ENCODE measurements at regions of chr17 and their contacts with region 1.

Region 1: GRCh38 chr17:58224315-58224714 is 5.3 kb upstream of the MKS1 start:
- DNase-seq: no peak
- H3K4me3 ChIP-seq: no peak overlapping the region
- H3K27ac ChIP-seq: no peak overlapping the region
- H3K4me1 ChIP-seq: peaks cover 0 to 6% (median 0%) of the 10 kb centered on the region in 4 experiments; a peak in 5 of 7 replicates
- H3K27me3 ChIP-seq: peaks cover 1 to 10% (median 5%) of the 10 kb centered on the region in 4 experiments; a peak in 4 of 7 replicates
- CTCF ChIP-seq: no peak
- EP300 ChIP-seq: no peak
- POLR2A ChIP-seq: no peak
- RAD21 ChIP-seq: no peak

Region 2: GRCh38 chr17:58236394-58236793 is 12.1 kb after region 1 on chr17:
- CTCF ChIA-PET with region 1: interaction called, 13 read pairs
- POLR2A ChIA-PET with region 1: interaction called, 5 read pairs
- DNase-seq: no peak
- H3K4me3 ChIP-seq: no peak overlapping the region
- H3K27ac ChIP-seq: no peak overlapping the region
- H3K4me1 ChIP-seq: no peaks in the 10 kb centered on the region
- H3K27me3 ChIP-seq: peaks cover 0 to 9% (median 5%) of the 10 kb centered on the region in 4 experiments; a peak in 4 of 7 replicates
- CTCF ChIP-seq: no peak
- EP300 ChIP-seq: no peak
- POLR2A ChIP-seq: no peak
- RAD21 ChIP-seq: no peak

Region 3: DNA sequence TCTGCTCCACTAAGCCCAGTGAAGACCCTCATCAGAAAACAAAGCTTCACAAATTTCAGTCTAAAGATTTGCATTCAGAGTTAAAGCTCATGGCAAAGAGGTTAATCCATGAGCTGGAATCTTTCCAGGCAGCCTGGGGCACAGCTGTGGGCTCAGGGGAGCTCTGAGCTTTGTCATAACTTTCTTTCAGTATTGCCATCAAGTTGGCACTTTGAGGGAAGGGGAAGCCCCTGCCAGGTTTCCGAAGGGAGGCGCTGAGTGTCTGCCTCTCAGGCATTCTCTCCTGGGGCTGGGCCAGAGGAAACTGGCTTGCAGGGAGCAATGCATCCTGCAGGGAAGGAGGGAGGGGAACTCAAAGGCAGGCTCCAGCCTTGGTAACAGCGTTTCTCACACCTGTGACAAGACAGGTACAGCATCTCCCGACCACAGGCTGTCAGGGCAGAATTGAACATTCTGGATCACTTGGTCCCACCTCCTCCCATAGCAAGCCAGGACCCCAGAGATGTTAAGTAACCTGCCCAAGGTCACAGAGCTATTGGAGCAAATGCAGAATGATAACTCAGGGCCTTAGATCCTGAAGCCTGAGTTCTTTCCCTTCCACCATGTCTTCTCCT is 18.0 kb after region 1 on chr17:
- CTCF ChIA-PET with region 1: interaction called, 13 read pairs
- POLR2A ChIA-PET with region 1: interaction called, 5 read pairs
- DNase-seq: no peak
- H3K4me3 ChIP-seq: no peak overlapping the region
- H3K27ac ChIP-seq: no peak overlapping the region
- H3K4me1 ChIP-seq: peaks cover 0 to 10% (median 0%) of the 10 kb centered on the region in 4 experiments; a peak in 3 of 7 replicates
- H3K27me3 ChIP-seq: peaks cover 0 to 9% (median 8%) of the 10 kb centered on the region in 4 experiments; a peak in 5 of 7 replicates
- CTCF ChIP-seq: 0 out of 4 replicates have a peak, but pooled peaks of 1 of the 3 experiments have one; percentile 4
- EP300 ChIP-seq: no peak
- POLR2A ChIP-seq: no peak
- RAD21 ChIP-seq: peak in 1 of 2 experiments; percentile 31; a peak in 1 of 4 replicates

Region 4: DNA sequence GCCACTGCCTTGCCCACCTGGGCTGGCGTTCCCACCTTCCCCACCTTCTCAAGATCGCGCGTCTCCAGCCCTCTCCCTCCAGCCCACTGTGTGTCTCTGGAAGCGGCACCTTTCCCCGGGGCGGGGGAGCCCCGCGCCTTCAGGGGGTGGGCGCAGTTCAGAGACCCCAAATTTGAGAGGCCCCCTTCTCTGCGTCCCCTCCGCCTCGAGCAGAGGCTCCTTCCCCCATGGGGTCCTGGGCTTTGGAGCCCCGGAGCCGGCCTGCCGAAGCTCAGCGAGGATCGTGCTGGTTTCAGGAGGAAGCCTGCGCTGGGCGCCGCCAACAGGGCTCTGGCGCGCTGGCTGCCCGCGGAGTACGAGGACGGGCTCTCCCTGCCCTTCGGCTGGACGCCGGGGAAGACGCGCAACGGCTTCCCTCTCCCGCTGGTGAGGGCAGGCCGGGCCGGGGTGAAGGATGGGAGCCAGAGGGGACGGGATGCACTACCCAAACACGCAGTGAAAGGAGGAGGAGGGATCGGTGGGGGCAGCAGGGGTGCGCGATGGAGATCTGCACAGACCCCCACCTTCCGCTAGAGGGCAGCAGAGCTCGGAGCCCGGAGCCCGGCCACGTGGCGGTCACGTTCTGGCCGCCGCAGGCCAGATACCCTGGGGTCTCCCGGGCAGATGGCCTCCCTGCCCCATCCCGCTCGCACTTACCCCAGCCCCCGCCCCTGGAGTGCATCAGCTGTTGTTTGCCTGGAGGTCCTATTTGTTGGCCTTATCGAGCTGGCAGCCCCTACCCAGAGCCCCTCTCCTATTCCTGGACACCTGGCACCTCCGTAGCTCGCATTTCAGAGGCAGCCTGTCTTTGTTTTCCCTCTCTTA is 25.2 kb after region 1 on chr17:
- CTCF ChIA-PET with region 1: interaction called, 15 read pairs
- POLR2A ChIA-PET with region 1: no interaction called
- DNase-seq: peak in 1 of 2 experiments; percentile 93
- H3K4me3 ChIP-seq: peak overlapping the region; percentile 28 to 56 (median 36); a peak in 7 of 8 replicates
- H3K27ac ChIP-seq: no peak overlapping the region
- H3K4me1 ChIP-seq: peaks cover 0 to 4% (median 1%) of the 10 kb centered on the region in 4 experiments; a peak in 4 of 7 replicates
- H3K27me3 ChIP-seq: peaks cover 36 to 70% (median 49%) of the 10 kb centered on the region in 4 experiments
- CTCF ChIP-seq: peak; percentile 85 to 88 (median 86)
- EP300 ChIP-seq: peak in 1 of 2 experiments; percentile 42; a peak in 1 of 3 replicates
- POLR2A ChIP-seq: no peak
- RAD21 ChIP-seq: peak; percentile 63 to 66

Region 5: DNA sequence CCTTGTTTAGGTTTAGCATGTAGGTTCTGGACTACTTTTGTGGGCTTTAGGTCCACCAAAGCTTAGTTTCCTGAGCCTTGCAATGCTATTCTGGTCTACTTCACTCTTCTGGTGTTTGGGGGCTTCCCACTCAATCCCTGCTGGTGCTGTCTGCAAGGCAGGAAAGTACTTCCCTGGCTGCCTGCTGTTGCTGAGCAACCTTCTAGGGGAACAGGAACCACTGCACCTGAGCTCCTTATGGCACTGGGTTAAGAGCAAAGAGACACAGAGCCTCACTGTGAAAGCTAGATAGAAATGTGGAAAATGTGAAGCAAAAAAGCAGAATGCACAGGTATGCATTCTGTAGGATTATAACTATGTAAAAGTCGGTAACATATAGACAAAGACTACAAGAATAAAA is 39.5 kb after region 1 on chr17:
- CTCF ChIA-PET with region 1: no interaction called
- POLR2A ChIA-PET with region 1: no interaction called
- DNase-seq: peak in 1 of 2 experiments; percentile 11
- H3K4me3 ChIP-seq: no peak overlapping the region
- H3K27ac ChIP-seq: no peak overlapping the region
- H3K4me1 ChIP-seq: no peaks in the 10 kb centered on the region
- H3K27me3 ChIP-seq: no peaks in the 10 kb centered on the region; a peak in 2 of 7 replicates
- CTCF ChIP-seq: no peak
- EP300 ChIP-seq: no peak
- POLR2A ChIP-seq: no peak
- RAD21 ChIP-seq: no peak